Activated CD8-positive, alpha-beta T cell treated with anti-CD3 and anti-CD28 coated beads for 36 hours (primary cell): ENCODE measurements at regions of chr14 and their contacts with region 1.

Region 1: DNA sequence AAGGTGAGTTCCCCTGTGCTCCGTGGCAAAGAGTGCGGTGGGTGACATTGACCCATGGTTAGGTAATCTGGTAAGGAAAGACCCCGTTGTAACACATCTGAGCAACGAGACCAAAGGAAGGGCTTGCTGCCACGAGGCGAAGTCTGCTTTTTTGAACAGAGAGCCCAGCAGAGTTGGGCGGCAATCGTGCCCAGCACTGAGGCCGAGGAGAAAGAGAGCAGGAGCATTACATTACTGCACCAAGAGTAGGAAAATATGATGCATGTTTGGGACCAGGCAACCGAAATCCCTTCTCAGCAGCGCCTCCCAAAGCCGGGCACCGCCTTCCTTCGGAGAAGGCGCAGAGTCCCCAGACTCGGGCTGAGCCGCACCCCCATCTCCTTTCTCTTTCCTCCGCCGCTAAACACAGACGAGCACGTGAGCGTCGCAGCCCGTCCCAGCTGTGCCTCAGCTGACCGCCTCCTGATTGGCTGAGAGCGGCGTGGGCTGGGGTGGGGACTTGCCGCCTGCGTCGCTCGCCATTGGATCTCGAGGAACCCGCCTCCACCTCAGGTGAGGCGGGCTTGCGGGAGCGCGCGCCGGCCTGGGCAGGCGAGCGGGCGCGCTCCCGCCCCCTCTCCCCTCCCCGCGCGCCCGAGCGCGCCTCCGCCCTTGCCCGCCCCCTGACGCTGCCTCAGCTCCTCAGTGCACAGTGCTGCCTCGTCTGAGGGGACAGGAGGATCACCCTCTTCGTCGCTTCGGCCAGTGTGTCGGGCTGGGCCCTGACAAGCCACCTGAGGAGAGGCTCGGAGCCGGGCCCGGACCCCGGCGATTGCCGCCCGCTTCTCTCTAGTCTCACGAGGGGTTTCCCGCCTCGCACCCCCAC is at the start of gene HIF1A:
- DNase-seq: peak; percentile 98
- ATAC-seq: peak; percentile 89
- H3K4me3 Mint-ChIP-seq: peak within 1 kb of the TSS; percentile 98
- H3K27ac Mint-ChIP-seq: peak within 1 kb of the TSS; percentile 96
- H3K4me1 Mint-ChIP-seq: peaks cover 47% of the 10 kb centered on the region
- H3K27me3 Mint-ChIP-seq: peaks cover 1% of the 10 kb centered on the region
- CTCF ChIP-seq: no peak
- total RNA-seq, gene HIF1A: 133 to 140 TPM

Region 2: DNA sequence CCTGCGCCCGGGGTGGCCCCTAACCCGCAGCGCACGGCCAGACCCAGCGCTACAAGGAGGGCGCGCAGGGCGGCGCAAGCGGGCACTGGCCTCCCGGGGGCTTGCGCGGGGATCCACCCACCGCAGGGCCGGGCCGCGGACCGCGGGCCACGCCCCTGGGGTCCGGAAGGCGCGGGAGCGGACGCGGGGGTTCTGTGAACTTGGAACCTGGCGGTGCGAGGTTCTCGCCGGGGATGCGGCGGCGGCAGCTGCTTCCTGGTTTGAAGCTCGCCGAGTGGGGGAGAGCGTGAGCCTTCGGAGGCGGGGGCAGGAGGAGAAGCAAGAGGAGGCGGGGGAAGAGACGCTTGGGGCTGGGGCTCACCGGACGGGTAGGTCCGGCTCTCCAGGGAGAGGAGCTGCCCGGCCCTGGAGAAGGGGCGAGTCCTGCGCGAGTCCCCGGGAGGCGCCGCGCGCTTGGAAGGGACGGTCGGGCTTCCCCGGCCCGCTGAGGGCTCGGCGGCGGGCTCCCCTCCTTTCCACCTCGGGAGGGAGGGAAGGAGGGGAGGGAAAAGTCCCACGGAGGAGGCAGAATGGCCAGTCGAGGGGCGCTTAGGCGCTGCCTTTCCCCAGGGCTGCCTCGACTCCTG is 373.6 kb before region 1 on chr14 and contains the start of gene PRKCH:
- CTCF ChIA-PET with region 1: no interaction called
- POLR2A ChIA-PET with region 1: interaction called, 3 read pairs
- intact Hi-C with region 1: loop called (anchors 10 kb)
- DNase-seq: peak; percentile 90
- ATAC-seq: peak; percentile 72
- H3K4me3 Mint-ChIP-seq: peak within 1 kb of the TSS; percentile 99
- H3K27ac Mint-ChIP-seq: peak within 1 kb of the TSS; percentile 93
- H3K4me1 Mint-ChIP-seq: peaks cover 22% of the 10 kb centered on the region
- H3K27me3 Mint-ChIP-seq: no peaks in the 10 kb centered on the region
- CTCF ChIP-seq: no peak
- total RNA-seq, gene PRKCH: 193 to 194 TPM

Region 3: GRCh38 chr14:61525293-61526011 is 169.6 kb before region 1 on chr14:
- CTCF ChIA-PET with region 1: interaction called, 3 read pairs
- POLR2A ChIA-PET with region 1: interaction called, 6 read pairs
- intact Hi-C with region 1: loop called (anchors 5 kb)
- DNase-seq: peak; percentile 89
- ATAC-seq: peak; percentile 77
- H3K4me3 Mint-ChIP-seq: peak overlapping the region; percentile 43
- H3K27ac Mint-ChIP-seq: peak overlapping the region; percentile 87
- H3K4me1 Mint-ChIP-seq: peaks cover 88% of the 10 kb centered on the region
- H3K27me3 Mint-ChIP-seq: no peaks in the 10 kb centered on the region
- CTCF ChIP-seq: no peak

Region 4: DNA sequence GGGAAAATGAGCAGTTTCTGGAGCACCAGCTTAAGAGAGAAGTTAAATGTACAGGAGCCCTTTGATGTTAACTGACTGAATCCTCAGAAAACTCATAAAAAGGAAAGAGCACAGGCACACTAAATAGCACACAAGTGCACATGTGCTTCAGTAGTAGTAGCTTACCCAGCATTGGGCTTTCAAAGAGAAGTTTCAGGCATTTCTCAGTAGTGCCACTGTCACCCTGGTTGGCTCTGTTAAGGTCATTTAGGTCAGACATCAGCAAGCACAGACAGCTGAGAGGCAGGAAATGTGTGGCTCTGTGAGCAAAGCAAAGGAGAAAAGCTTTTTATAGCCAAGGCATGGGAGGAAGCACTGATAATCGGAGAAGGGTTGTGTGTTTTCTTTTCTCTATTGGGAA is 96.1 kb before region 1 on chr14:
- CTCF ChIA-PET with region 1: no interaction called
- POLR2A ChIA-PET with region 1: interaction called, 8 read pairs
- intact Hi-C with region 1: loop called (anchors 10 kb)
- DNase-seq: peak; percentile 68
- ATAC-seq: peak; percentile 70
- H3K4me3 Mint-ChIP-seq: no peak overlapping the region
- H3K27ac Mint-ChIP-seq: peak overlapping the region; percentile 88
- H3K4me1 Mint-ChIP-seq: peaks cover 52% of the 10 kb centered on the region
- H3K27me3 Mint-ChIP-seq: no peaks in the 10 kb centered on the region
- CTCF ChIP-seq: no peak

Region 5: DNA sequence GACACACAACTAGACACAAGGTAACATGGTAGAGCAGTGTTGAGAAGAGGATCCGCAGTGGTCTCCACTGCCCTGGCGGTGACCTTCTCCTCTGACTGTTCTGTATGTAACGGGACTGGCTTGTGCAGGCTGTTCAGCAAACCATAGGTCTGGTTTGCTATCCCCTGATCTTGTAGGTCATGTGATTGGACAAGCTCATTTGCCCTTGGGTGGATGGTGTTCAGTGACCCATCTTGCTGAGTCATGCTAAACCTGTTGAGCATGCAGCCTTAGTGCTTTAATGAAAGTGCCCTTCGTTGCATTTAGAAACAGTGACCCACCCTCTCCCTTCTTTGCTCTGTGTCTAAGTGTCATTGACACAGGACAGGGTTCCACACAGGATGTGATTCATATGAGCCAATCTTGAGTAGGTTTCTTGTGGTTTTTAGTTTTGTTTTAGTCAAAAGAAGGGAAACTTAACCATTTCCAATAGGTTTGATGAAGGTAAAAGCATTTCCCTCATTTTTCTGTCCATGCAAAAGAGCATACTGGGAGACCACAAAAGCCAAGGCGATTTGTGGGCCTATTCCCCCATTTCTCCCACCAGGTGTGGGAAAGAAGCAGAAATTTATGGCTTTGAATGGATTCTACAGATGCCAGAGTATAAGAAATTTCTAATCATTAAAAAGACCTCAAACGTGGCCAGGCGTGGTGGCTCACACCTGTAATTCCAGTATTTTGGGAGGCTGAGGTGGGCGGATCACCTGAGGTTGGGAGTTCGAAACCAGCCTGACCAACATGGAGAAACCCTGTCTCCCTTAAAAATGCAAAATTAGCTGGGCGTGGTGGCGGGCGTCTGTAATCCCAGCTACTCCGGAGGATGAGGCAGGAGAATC is 32.4 kb before region 1 on chr14:
- CTCF ChIA-PET with region 1: interaction called, 4 read pairs
- POLR2A ChIA-PET with region 1: interaction called, 16 read pairs
- intact Hi-C with region 1: loop called (anchors 1 kb)
- DNase-seq: peak; percentile 81
- ATAC-seq: peak; percentile 85
- H3K4me3 Mint-ChIP-seq: peak overlapping the region; percentile 51
- H3K27ac Mint-ChIP-seq: peak overlapping the region; percentile 97
- H3K4me1 Mint-ChIP-seq: peaks cover 61% of the 10 kb centered on the region
- H3K27me3 Mint-ChIP-seq: no peaks in the 10 kb centered on the region
- CTCF ChIP-seq: no peak

Region 6: GRCh38 chr14:61847861-61848260 is 152.8 kb after region 1 on chr14:
- CTCF ChIA-PET with region 1: no interaction called
- POLR2A ChIA-PET with region 1: no interaction called
- intact Hi-C with region 1: no loop called
- DNase-seq: no peak
- ATAC-seq: no peak
- H3K4me3 Mint-ChIP-seq: no peak overlapping the region
- H3K27ac Mint-ChIP-seq: no peak overlapping the region
- H3K4me1 Mint-ChIP-seq: no peaks in the 10 kb centered on the region
- H3K27me3 Mint-ChIP-seq: peaks cover 15% of the 10 kb centered on the region
- CTCF ChIP-seq: no peak